ENCODE measurements at regions of chr3 and their contacts with region 1.

Region 1: DNA sequence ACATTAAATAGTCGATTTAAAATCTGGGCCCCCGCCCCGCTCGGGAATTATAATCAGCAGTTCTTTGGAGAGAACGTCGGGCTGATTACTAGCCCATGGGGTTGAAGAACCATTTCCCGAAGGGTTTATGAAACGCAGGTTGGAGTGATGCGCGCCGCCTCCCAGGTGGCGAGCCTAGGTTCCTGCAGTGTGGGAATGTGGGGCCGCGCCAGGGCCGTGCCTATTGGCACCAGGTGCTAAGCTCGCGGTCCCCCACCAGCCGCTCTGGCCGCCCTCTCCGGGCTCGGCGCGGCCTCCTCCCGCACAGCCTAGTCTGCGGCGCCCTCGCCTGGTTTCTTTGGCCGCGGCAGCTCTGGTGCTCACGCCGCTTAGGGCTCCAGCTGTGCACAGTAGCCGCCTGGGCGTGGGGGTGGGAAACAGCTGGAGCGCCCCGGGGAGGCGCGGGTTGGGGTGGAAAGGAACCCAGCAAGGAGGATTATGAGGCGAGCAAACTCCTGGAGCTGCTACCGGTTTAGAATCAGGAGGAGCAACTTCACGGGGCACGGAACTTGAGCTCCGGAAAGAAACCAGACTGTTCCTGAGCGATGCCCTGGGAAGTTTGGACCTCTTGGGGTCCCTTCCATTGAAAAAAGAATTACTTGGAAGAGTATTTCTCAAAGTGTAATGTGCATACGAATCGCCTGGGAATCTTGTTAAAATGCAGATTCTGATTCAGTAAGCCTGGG is 5.6 kb upstream of the MECOM start:
- DNase-seq: peak; percentile 27 to 71 (median 40)
- H3K4me3 ChIP-seq: peak overlapping the region; percentile 30
- H3K27ac ChIP-seq: no peak overlapping the region
- H3K4me1 ChIP-seq: peaks cover 3% of the 10 kb centered on the region
- H3K27me3 ChIP-seq: no peaks in the 10 kb centered on the region
- CTCF ChIP-seq: no peak
- EP300 ChIP-seq: no peak
- POLR2A ChIP-seq: no peak

Region 2: DNA sequence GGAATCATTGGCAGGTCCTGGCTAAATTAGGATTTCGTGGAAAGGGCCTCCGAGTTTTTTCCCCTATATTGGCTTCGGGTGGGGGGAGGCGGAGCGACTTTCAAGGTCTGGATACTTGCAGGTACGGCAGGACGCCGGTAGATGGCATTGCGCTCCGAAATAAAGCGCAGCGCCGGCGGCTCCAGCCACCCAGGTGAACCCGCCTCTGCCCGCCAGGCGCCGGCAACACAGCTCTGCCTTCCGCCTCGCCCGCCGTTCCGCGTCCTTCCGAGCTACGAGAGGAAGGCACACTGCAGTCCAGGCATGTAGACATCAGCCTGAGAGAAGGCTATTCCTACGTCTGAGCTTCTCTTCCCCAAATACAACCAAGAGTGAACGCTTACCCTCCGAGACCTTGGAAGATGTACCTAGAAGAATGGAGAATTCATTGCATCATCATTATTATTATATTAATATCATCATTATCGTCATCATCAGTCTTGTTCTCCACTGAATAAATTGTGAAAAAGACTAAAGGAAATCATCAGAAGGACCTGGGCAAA is 519.7 kb before region 1 on chr3:
- intact Hi-C with region 1: loop called in 2 of 4 experiments (anchors 10 kb)
- DNase-seq: peak; percentile 42 to 81 (median 55)
- H3K4me3 ChIP-seq: peak overlapping the region; percentile 9
- H3K27ac ChIP-seq: no peak overlapping the region
- H3K4me1 ChIP-seq: peaks cover 3% of the 10 kb centered on the region
- H3K27me3 ChIP-seq: no peaks in the 10 kb centered on the region
- CTCF ChIP-seq: peak; percentile 32 to 49 (median 40)
- EP300 ChIP-seq: no peak
- POLR2A ChIP-seq: no peak

Region 3: GRCh38 chr3:169744366-169745054 is 75.4 kb after region 1 on chr3:
- intact Hi-C with region 1: loop called in 1 of 4 experiments (anchors 10 kb)
- DNase-seq: no peak
- H3K4me3 ChIP-seq: no peak overlapping the region
- H3K27ac ChIP-seq: no peak overlapping the region
- H3K4me1 ChIP-seq: no peaks in the 10 kb centered on the region
- H3K27me3 ChIP-seq: no peaks in the 10 kb centered on the region
- CTCF ChIP-seq: peak in 2 of 3 donors; percentile 12 to 28
- EP300 ChIP-seq: no peak
- POLR2A ChIP-seq: no peak